Motor neuron (in vitro differentiated cells): ENCODE measurements at regions of chr10 and their contacts with region 1.

Region 1: GRCh38 chr10:50788951-50789945 is 49.5 kb downstream of the ASAH2B start:
- ATAC-seq: peak in 7 of 8 experiments; percentile 43 to 95 (median 86)
- H3K4me3 ChIP-seq: no peak overlapping the region
- H3K27ac ChIP-seq: no peak overlapping the region
- H3K4me1 ChIP-seq: peaks cover 0 to 6% of the 10 kb centered on the region in 2 donors

Region 2: DNA sequence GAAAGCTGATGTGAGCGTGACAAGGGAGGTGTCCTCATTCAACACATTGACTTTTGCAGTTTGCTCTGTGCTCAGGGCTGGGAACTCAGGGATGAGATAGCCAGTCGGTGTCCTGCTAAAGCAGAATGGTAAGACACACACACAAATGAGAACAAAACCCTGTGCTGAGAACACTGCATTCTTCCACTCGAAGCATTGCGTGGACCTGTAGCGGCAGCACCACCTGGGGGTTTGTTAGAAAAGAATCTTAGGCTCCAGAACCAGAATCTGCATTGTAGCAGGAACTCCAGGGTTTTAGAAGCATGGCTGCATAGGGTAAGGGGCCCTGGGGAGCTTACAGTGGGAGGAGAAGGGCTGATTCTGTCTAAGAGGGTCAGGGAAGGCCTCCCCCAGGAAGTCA is 1005.6 kb before region 1 on chr10:
- in situ Hi-C with region 1: no loop called
- ATAC-seq: peak in 3 of 8 experiments; percentile 12 to 16 (median 13)
- H3K4me3 ChIP-seq: no peak overlapping the region
- H3K27ac ChIP-seq: peak overlapping the region; percentile 15 to 75
- H3K4me1 ChIP-seq: peaks cover 18 to 38% of the 10 kb centered on the region in 2 donors

Region 3: GRCh38 chr10:50304660-50305059 is 484.6 kb before region 1 on chr10:
- in situ Hi-C with region 1: no loop called
- ATAC-seq: no peak
- H3K4me3 ChIP-seq: no peak overlapping the region
- H3K27ac ChIP-seq: no peak overlapping the region
- H3K4me1 ChIP-seq: no peaks in the 10 kb centered on the region

Region 4: GRCh38 chr10:50653142-50653541 is 136.1 kb before region 1 on chr10:
- in situ Hi-C with region 1: no loop called
- ATAC-seq: peak in 3 of 8 experiments; percentile 64 to 72 (median 72)
- H3K4me3 ChIP-seq: no peak overlapping the region
- H3K27ac ChIP-seq: no peak overlapping the region
- H3K4me1 ChIP-seq: no peaks in the 10 kb centered on the region

Region 5: GRCh38 chr10:50874723-50875122 is 85.5 kb after region 1 on chr10:
- in situ Hi-C with region 1: loop called in 1 of 9 experiments (anchors 25 kb)
- ATAC-seq: no peak
- H3K4me3 ChIP-seq: no peak overlapping the region
- H3K27ac ChIP-seq: no peak overlapping the region
- H3K4me1 ChIP-seq: no peaks in the 10 kb centered on the region

Region 6: DNA sequence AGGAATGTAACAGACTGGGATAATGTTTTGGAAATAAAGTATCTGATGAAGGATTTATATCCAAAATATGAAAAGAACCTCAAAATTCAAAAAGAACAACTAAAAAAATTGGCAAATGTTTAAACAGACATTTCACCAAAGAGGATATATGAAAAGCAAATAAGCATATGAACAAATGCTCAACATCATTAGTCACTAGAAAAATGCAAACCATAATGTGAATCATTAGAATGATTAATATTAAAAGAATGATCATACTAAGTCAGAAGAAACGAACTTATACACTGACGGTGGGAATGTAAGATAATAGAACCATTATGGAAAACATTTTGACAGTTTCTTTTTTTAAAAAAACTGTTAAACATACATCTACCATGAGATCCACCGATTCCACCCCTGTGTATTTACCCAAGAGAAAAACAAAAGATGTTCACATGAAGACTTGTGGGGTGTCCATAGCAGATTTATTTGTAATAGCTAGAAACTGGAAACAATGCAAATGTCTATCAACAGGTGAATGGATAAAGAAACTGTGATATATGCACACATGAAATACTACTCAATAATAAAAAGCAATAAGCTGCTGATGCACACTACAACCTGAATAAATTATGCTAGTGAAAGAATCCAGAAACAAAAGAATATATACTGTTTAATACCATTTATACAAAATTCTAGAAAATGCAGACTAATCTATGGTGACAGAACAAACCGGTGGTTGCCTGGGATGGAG is 320.7 kb after region 1 on chr10:
- in situ Hi-C with region 1: no loop called
- ATAC-seq: peak in 1 of 8 experiments; percentile 11
- H3K4me3 ChIP-seq: no peak overlapping the region
- H3K27ac ChIP-seq: no peak overlapping the region
- H3K4me1 ChIP-seq: no peaks in the 10 kb centered on the region